Activated CD4-positive, alpha-beta T cell treated with anti-CD3 and anti-CD28 coated beads, Interleukin-2, amount 10 ng/mL, durations not matched to agents 24 days and 14 days (primary cell): ENCODE measurements at regions of chr5 and their contacts with region 1.

Region 1: DNA sequence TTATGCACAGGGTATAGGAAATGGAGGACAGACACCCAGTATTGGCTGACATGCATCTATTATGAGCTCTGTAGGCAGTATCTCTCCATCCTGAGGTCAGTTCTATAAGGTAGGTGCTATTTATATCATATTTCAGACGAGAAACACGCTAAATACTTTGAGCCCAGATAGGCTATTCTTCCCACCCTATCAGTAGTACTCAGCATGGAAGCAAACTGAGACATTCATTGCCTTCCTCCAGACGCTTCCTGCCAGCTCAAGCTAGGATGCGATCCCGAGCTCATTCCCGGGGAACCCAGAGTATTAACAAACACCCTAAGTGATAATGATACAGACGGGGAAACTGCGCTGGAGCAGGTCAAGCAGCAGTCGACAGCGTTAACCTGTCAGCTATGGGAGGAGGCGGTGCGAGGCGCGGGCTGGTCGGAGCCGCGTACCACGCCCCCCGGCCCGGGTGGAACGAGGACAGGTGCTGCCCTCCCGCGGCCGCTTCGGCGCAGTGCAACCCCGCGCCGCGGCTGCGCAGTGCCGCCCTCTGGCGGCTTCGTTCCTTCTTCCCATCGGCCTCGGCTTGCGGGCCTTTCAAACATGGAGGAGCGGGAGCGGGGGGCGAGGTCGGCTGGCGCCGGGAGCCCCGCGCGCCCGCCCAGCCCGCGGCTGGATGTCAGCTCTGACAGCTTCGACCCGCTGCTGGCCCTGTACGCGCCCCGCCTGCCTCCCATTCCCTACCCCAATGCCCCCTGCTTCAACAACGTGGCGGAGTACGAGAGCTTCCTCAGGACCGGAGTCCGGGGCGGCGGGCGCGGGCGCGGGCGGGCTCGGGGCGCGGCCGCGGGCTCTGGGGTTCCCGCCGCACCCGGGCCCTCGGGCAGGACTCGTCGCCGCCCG is at the start of gene LSM11:
- DNase-seq: peak; percentile 98
- H3K4me3 Mint-ChIP-seq: peak within 1 kb of the TSS; percentile 98
- H3K27ac Mint-ChIP-seq: peak within 1 kb of the TSS; percentile 91
- H3K4me1 Mint-ChIP-seq: peaks cover 33% of the 10 kb centered on the region
- H3K27me3 Mint-ChIP-seq: no peaks in the 10 kb centered on the region
- total RNA-seq, gene LSM11: 8.6 and 9.2 TPM in 2 replicates

Region 2: DNA sequence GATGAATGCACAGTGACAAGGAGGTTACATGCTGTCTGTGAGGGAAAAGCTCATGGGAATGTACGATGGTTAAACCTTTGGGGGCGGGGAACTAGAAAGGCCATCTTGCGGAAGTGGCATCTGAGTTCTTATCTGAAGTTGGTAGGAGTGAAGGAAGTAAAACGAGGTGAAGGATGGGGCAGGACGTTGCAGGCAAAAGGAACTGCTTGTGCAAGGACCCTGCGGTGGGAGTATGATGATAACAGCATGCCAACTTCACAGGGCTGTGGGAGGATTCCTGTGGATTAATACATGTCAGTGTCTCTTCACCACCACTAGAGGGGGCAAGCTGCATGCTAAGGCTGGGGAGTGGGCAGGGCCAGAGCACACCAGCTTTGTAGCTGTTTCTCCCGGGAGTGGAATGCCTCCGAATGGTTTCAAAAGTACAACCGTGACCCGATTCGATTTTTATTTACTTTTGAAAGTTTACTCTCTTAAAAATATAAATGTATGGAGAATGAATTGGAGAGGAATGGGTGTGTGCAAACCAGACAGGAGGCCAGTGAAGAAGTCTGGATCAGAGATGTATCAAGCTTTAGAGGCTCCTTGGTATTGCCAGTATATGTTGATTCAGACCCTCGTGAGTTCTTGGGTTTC is 415.0 kb before region 1 on chr5:
- intact Hi-C with region 1: loop called (anchors 1 kb)
- DNase-seq: peak; percentile 87
- H3K4me3 Mint-ChIP-seq: peak overlapping the region; percentile 36
- H3K27ac Mint-ChIP-seq: peak overlapping the region; percentile 89
- H3K4me1 Mint-ChIP-seq: peaks cover 36% of the 10 kb centered on the region
- H3K27me3 Mint-ChIP-seq: no peaks in the 10 kb centered on the region

Region 3: DNA sequence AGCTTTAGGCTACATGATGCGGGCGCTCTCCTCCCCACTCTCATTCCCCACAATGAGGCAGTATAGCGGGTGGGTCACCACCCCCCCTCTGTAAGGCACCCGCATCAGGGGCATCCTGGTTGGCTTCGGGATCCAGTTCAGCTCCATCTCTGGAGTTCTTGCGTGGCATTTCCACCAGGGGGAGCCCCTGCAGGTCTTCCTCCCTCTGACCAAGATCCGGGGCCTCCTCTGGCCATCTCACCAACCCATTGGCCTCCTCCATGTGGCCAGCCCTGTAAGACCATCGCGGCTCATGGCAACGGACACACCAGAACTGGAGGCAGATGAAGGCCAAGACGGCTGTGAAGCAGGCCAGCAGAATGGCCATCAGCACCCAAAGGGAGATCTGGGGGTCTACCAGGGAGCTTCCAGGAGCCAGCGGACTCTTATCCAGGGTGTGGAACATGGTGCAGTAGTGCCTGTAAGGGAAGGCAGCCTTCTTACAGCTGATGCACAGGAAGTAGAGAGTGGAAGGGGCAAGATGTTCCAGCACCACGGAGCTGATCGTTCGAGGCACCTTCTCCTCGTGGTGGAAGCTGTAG is 400.5 kb before region 1 on chr5:
- intact Hi-C with region 1: loop called (anchors 5 kb)
- DNase-seq: peak; percentile 77
- H3K4me3 Mint-ChIP-seq: no peak overlapping the region
- H3K27ac Mint-ChIP-seq: peak overlapping the region; percentile 35
- H3K4me1 Mint-ChIP-seq: peaks cover 16% of the 10 kb centered on the region
- H3K27me3 Mint-ChIP-seq: no peaks in the 10 kb centered on the region

Region 4: DNA sequence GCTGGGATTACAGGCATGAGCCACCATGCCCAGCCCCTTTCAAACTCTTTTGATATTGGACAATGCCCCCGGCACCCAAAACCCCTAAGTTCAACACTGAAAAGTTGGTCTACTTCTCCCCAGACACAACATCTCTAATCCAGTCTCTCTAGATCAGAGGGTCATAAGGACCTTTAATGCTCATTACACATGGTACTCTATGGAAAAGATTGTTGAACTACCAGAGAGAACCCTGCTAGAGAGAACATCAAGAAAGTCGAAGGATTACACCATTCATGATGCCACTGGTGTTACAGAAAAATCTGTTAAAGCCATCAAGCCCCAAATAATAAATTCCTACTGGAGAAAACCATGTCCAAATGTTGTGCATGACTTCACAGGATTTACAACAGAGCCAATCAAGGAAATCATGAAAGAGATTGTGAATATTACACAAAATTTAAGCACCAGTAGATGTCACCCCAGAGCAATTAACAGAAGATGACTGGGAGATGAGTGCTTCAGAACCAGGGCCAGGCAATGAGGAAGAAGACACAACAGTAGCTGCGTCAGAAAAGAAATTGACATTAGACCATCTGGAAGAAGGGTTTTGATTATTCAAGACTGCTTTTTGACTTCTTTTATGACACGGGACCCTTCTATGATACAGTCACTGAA is 311.7 kb before region 1 on chr5:
- intact Hi-C with region 1: loop called (anchors 1 kb)
- DNase-seq: peak; percentile 84
- H3K4me3 Mint-ChIP-seq: no peak overlapping the region
- H3K27ac Mint-ChIP-seq: no peak overlapping the region
- H3K4me1 Mint-ChIP-seq: peaks cover 11% of the 10 kb centered on the region
- H3K27me3 Mint-ChIP-seq: peaks cover 30% of the 10 kb centered on the region

Region 5: DNA sequence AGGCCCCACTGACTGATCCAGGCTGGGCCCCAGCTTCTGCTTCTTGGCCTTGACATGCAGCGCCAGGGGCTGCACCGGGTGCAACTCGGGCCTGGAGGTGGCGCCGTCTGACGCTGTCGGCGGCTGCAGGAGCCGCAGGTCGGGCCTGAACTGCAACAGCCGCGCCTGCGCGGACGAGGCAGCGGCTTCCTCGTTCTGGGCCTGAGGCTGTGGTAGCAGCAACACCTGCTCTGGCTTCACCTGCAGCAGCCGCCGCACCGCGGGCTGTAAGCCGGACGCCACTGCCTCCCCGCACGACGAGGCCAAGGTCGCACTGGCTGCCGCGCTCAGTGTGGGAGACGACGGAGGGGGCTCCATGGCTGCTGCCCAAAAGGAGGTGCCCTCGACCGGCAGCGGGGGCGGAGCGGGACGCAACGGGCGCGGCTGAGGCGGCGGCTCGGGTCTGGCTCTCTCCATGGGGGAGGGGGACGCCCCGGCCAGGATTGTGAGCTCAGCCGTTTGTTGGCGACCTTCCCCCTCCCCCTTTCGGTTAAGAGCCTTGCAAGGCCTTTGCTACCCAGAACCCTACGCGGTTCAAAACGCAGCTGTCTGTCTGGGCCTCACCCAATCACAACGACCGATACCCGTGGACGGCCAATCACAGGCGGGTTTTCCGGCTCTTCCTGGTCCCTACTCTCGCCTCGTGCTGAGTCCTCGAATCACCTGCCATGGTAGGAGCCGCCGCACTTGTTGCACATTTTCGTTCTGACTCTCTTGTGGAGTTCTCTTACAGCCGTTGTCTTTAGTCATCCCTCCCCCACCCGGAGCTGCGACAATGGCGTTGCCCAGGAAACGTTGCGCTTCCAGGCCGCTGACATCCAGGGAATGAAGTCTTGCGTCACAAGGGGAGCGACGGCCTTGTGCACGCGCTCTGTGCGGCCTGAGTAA is 91.5 kb before region 1 on chr5 and contains the start of gene SOX30:
- intact Hi-C with region 1: loop called (anchors 5 kb)
- DNase-seq: peak; percentile 93
- H3K4me3 Mint-ChIP-seq: peak within 1 kb of the TSS; percentile 79
- H3K27ac Mint-ChIP-seq: peak within 1 kb of the TSS; percentile 87
- H3K4me1 Mint-ChIP-seq: peaks cover 12% of the 10 kb centered on the region
- H3K27me3 Mint-ChIP-seq: no peaks in the 10 kb centered on the region
- total RNA-seq, gene SOX30: 0.19 TPM in 1 of 2 replicates, not detected in the other

Region 6: GRCh38 chr5:157670662-157671591 is 72.5 kb before region 1 on chr5 and contains the start of gene C5orf52:
- intact Hi-C with region 1: loop called (anchors 1 kb)
- DNase-seq: peak; percentile 79
- H3K4me3 Mint-ChIP-seq: peak within 1 kb of the TSS; percentile 96
- H3K27ac Mint-ChIP-seq: peak within 1 kb of the TSS; percentile 91
- H3K4me1 Mint-ChIP-seq: peaks cover 34% of the 10 kb centered on the region
- H3K27me3 Mint-ChIP-seq: peaks cover 17% of the 10 kb centered on the region
- total RNA-seq, gene C5orf52: 0.42 TPM in 1 of 2 replicates, not detected in the other

Region 7: GRCh38 chr5:157731272-157732129 is 11.9 kb before region 1 on chr5 and contains the start of gene THG1L:
- intact Hi-C with region 1: loop called (anchors 1 kb)
- DNase-seq: peak; percentile 100
- H3K4me3 Mint-ChIP-seq: peak within 1 kb of the TSS; percentile 97
- H3K27ac Mint-ChIP-seq: peak within 1 kb of the TSS; percentile 98
- H3K4me1 Mint-ChIP-seq: peaks cover 25% of the 10 kb centered on the region
- H3K27me3 Mint-ChIP-seq: no peaks in the 10 kb centered on the region
- total RNA-seq, gene THG1L: 25.0 and 26.7 TPM in 2 replicates